ENCODE measurements at regions of chr19 and their contacts with region 1.

Region 1: GRCh38 chr19:23273590-23274413 is 23.6 kb upstream of the ZNF724 start:
- DNase-seq: peak; percentile 85
- H3K4me3 ChIP-seq: peak overlapping the region; percentile 36 to 88 (median 72)
- H3K27ac ChIP-seq: peak overlapping the region; percentile 25
- H3K4me1 ChIP-seq: peaks cover 4% of the 10 kb centered on the region
- H3K27me3 ChIP-seq: no peaks in the 10 kb centered on the region
- CTCF ChIP-seq: no peak
- POLR2A ChIP-seq: peak; percentile 48

Region 2: DNA sequence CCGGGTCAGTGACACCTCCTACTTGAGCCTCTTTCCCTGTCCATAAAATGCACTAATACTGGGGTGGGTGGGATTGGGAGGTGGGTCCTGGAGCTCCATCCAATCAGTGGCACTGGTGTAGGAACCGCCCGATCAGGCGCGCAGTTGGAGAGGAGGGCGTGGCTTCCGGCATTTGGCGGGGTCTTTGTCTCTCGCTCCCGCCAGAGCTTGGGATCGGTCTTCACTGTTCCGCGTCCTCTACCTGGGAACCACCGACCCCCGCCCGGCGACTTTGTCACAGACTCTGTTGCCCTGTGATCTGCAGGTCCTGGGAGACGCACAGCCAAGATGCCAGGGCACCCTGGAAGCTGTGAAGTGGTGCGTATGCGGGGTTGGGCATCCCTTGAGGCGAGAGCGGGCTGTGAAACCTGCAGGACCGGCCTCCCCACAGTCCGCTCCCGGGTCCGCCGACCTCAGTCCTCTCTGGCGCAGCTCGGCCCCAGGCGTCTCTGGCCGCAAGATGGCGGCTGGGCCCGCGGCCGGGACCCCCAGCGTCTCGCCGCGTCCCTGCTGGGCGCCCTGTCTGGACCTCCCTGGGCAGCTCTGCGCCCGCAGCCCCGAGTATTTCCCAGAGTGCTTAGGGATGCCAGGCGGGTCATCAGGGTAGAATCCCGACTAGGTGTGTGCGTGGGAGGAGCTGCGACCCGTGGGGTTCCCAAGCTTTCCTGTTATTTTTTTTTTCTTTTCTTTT is 198.6 kb before region 1 on chr19:
- CTCF ChIA-PET with region 1: no interaction called
- POLR2A ChIA-PET with region 1: no interaction called
- dilution Hi-C with region 1: no loop called
- intact Hi-C with region 1: loop called (anchors 5 kb)
- DNase-seq: peak; percentile 41
- H3K4me3 ChIP-seq: peak overlapping the region; percentile 43 to 78 (median 71)
- H3K27ac ChIP-seq: peak overlapping the region; percentile 78
- H3K4me1 ChIP-seq: peaks cover 6% of the 10 kb centered on the region
- H3K27me3 ChIP-seq: no peaks in the 10 kb centered on the region
- CTCF ChIP-seq: no peak
- POLR2A ChIP-seq: no peak